A673 (cell line): ENCODE measurements at regions of chr2 and their contacts with region 1.

Region 1: DNA sequence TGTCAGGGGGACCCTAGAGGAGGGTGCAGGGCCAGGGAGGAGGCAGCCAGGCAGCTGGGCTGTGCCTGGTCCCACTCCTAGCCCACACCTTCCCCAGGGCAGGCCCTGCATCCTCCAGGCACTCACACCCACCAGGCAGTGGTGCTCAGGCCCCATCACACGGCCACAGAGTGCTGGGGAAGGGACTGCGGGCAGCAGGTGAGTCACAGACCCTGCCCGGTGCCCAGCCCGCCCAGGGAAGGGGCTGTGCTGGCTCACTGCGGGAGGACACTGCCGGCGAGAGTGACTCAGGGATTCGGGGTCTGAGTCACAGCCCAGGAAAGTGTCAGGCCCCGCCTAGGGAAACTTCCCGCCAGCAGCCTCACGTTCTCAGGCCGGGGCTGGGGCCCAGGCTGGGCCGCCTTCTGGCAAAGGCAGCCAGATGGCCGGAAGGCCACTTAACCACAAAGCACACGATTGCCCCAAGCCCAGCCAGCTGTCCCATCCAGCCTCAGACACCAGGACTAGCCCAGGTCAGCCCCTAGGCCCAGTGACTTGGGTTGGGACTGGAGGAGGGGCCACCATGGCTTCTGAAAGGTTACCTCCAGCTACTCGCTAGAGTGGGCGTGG is 42.2 kb downstream of the BIN1 start:
- DNase-seq: peak; percentile 78
- H3K4me3 ChIP-seq: no peak overlapping the region
- H3K27ac ChIP-seq: peak overlapping the region; percentile 63
- H3K4me1 ChIP-seq: peaks cover 11% of the 10 kb centered on the region
- H3K27me3 ChIP-seq: no peaks in the 10 kb centered on the region
- CTCF ChIP-seq: no peak

Region 2: DNA sequence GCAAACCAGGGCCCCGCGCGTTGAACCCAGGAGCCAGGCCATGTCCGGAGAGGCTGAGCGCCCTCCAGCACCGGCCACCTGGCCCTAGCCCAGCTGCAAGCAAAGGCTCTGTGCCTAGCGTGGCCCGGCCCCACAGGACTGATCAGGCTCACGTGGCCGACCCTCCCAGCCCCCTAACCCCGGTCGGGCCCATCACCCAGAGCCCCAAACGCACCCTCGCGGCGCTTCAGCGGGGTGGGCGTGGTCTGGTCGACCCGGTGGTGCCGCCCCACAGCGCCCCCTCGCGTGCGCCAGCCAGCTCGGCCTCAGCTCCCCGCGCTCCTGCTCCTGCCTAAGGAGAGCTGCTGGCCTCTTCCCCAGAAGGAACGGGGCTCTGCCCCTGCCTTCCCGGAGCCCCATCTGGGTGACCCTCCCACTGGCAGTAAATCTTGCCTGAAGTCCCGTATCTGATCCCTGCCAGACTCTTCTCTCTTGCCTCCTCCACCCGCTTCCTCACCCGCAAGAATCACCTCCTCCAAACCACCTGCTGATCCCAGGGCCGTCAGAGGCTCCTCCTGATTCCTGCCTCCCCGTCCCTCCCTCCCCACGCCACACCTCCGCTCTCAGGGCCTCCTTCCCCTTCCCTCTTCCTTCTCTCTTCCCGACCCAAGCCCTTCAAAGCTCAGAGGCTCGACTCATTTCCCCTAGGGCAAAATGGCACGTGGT is 178.4 kb before region 1 on chr2:
- CTCF ChIA-PET with region 1: no interaction called
- POLR2A ChIA-PET with region 1: no interaction called
- intact Hi-C with region 1: no loop called
- DNase-seq: peak; percentile 76
- H3K4me3 ChIP-seq: peak overlapping the region; percentile 29
- H3K27ac ChIP-seq: no peak overlapping the region
- H3K4me1 ChIP-seq: peaks cover 2% of the 10 kb centered on the region
- H3K27me3 ChIP-seq: no peaks in the 10 kb centered on the region
- CTCF ChIP-seq: peak; percentile 91

Region 3: DNA sequence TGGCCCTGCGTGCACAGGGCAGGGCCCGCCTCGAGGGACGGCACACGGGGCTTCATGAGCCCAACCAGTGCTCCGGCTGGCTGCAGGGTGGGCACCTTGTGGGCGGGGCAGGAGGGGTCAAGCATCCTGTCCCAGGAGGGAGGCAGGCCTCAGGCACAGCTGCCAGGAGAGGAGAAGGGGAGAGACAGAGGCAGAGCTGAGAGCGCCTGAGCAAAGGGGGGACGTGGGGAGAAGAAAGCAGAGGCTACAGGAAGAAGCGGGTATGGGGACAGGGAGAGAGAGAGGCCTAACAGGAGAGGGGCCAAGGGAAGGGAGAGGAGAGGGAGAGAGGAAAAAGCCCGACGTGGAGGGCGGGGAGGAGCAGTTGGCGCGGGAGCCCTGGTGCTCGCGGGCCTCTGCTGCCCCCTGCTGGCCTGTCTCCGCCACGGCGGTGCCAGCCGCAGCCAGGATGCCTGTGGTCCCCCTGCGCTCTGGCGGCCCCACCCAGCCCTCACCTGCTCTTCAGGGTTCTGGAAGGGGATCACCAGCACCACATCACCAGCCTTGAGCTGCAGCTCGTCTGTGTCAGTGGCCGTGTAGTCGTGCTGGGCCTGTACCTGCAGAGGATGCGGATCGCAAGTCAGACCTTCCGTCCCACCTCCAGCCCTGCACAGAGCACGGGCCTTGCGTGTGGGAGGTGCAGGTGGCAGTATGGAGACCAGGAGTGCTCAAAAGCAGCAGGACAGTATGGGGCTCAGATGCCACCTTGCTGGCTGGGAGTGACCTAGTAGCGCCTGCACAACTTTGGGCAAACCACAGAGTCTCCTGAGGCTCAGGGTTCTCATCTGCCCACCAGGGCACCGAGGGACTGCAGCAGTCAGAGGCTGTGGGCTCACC is 14.6 kb before region 1 on chr2:
- CTCF ChIA-PET with region 1: no interaction called
- POLR2A ChIA-PET with region 1: no interaction called
- intact Hi-C with region 1: no loop called
- DNase-seq: peak; percentile 67
- H3K4me3 ChIP-seq: no peak overlapping the region
- H3K27ac ChIP-seq: no peak overlapping the region
- H3K4me1 ChIP-seq: no peaks in the 10 kb centered on the region
- H3K27me3 ChIP-seq: no peaks in the 10 kb centered on the region
- CTCF ChIP-seq: peak; percentile 95

Region 4: DNA sequence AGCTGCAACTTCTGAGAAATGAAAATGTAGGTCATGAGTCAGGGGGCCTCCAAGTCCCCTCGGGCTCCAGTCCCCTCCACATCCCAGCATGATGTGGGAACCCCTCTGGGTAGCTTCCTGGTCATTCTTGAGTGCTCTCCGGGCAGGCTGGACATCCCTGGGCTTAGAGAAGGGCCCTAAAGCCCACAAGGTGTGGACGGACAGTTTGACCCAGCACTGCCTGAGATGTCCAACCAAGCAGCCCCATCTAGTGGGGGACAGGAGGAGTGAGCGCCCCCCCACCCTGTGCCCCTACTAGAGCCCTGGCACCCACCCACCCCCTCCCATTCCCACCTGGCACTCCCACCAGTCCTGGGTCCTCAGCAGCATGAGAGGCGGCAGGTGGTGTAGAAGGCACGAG is 109.4 kb after region 1 on chr2:
- CTCF ChIA-PET with region 1: no interaction called
- POLR2A ChIA-PET with region 1: no interaction called
- intact Hi-C with region 1: loop called (anchors 5 kb)
- DNase-seq: no peak
- H3K4me3 ChIP-seq: no peak overlapping the region
- H3K27ac ChIP-seq: no peak overlapping the region
- H3K4me1 ChIP-seq: peaks cover 5% of the 10 kb centered on the region
- H3K27me3 ChIP-seq: no peaks in the 10 kb centered on the region
- CTCF ChIP-seq: peak; percentile 31; the same call in 1 of the 2 replicates

Region 5: DNA sequence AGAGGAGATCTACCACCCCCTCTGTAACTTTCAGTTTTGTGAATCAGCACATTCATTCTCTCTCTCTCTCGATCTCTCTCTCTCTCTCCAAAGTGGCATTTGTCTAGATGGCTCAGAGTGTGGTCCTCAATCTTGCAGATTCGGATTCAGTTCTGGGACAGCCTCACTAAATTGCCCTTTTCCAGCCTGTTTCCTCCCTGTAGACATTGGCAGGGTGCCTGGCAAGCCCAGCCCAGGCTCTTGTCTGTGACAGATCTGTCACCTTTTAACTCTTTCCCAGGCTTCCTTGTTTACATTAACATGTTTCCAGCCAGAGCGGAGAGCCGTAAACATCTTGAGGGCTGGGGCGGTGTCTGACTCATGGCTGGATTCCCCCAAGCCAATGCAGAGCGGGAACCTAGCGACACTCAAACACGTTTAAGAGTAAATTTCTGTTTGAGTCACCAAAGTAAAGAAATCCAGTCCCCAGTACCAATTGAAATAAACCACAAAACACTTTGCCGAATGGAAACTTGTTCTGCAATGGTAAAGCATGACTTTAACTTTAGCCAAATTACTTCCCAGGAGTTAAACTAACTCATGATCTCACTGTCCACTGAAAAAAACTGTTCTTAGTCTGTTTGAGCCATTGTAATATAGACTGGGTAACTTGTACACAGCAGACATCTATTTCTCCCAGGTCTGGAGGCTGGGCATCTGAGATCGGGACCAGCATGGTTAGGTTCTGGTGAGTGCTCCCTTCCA is 161.9 kb after region 1 on chr2:
- CTCF ChIA-PET with region 1: interaction called, 15 read pairs
- POLR2A ChIA-PET with region 1: no interaction called
- intact Hi-C with region 1: no loop called
- DNase-seq: peak; percentile 67
- H3K4me3 ChIP-seq: no peak overlapping the region
- H3K27ac ChIP-seq: no peak overlapping the region
- H3K4me1 ChIP-seq: peaks cover 26% of the 10 kb centered on the region
- H3K27me3 ChIP-seq: no peaks in the 10 kb centered on the region
- CTCF ChIP-seq: no peak